ENCODE measurements at regions of chr13 and their contacts with region 1.

Region 1: DNA sequence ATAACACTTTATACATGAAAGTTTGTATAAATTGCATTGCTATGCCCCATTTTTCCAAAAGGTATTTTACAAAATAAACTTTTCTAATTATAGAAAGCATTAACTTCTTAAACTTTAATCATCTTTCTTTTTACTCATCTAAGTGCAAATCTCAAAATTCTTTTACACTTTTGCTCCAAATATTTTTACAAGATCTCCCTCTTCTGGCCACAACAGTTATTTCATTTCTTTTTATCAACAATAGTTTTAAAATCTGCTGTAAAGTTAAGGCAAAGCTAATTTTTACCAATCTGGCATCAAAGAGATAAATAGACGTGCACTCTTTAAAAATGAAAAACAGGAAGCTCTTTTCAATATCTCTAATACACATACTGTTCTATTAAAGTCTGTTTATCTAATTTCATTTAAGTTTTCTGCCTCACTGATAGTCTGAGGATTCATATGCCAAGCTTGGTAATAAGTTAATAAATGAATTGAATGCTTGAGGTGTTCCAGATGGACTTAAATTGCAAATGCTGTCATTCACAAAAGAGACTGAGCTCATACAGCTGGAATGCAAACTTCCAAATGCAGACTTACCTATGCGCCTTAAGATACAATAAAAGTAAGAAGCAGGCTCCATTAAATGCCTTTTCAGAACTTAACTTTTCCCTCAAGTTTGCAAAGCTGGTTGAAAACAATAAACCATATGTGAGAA is 583.0 kb upstream of the ATXN8OS start:
- DNase-seq: peak; percentile 24

Region 2: GRCh38 chr13:70568571-70568970 is 1044.0 kb after region 1 on chr13:
- in situ Hi-C with region 1: loop called (anchors 25 kb)
- DNase-seq: peak; percentile 38

Measured in KBM-7 (cell line).